Common myeloid progenitor, CD34-positive (primary cell): ENCODE measurements at regions of chr7 and their contacts with region 1.

Region 1: GRCh38 chr7:152336754-152337368 is 98.9 kb downstream of the KMT2C start:
- DNase-seq: peak; percentile 53 to 58 (median 56)
- H3K4me3 ChIP-seq: peak overlapping the region in 2 of 7 experiments; percentile 64 to 77
- H3K27ac ChIP-seq: peak overlapping the region; percentile 4 to 57
- H3K4me1 ChIP-seq: peaks cover 0 to 27% (median 8%) of the 10 kb centered on the region in 4 experiments
- H3K27me3 ChIP-seq: no peaks in the 10 kb centered on the region

Region 2: DNA sequence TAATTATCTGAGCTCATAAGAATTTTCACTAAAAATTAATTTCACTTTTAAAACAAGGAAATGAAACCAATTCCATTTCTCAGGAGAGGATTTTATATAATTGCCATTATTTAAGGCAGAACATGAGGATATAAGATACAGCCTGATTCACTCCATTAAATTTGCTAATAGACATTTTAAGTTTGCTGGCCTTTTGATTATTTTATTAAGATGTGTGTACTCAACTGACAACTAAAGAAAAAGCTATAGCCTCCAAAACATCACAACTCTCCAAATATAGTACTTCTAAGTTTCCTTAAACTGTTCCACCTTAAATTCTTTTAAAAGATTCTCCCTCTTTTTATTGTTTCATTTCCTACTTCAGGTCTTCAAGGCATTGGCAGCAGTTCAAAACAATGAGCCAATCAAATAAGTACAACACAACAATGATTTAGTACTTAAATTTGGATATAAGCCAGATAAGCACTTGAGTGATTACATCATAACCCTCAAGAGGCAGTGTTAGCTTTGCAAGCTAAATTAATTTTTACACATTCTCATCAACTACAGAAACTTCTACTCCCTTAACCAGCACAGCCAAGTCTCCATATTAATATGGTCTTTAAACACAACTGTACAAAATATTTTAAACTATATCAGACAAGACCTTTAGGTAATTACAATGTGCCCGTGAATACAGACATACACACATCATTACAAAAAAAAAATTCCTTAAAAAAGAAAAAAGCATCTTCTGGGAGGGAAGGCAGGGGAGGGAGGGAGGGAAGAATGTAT is 22.8 kb before region 1 on chr7:
- CTCF ChIA-PET with region 1: interaction called, 13 read pairs
- POLR2A ChIA-PET with region 1: no interaction called
- DNase-seq: peak; percentile 91 to 96 (median 96)
- H3K4me3 ChIP-seq: peak overlapping the region in 1 of 7 experiments; percentile 4
- H3K27ac ChIP-seq: peak overlapping the region; percentile 33 to 74
- H3K4me1 ChIP-seq: peaks cover 3 to 10% (median 4%) of the 10 kb centered on the region in 4 experiments
- H3K27me3 ChIP-seq: no peaks in the 10 kb centered on the region

Region 3: DNA sequence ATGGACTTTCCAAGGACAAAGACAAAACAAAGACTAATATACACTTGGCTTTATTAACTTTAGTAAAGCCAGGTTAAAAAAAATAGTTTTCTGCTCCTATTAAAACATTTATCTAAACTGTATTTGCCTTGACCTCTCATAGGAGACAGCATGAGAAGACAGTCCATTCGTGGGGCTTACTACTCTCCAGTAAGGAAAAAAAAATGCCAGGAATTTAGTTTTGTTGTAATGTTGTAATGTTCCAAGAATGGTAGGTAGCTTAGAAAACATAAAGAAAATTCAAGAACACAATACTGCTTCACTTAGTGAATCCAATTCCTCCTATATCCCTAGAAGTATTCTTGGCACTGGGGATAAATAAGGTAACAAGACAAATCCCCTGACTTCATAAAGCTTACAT is 17.2 kb after region 1 on chr7:
- CTCF ChIA-PET with region 1: interaction called, 14 read pairs
- POLR2A ChIA-PET with region 1: no interaction called
- DNase-seq: no peak
- H3K4me3 ChIP-seq: no peak overlapping the region
- H3K27ac ChIP-seq: no peak overlapping the region
- H3K4me1 ChIP-seq: no peaks in the 10 kb centered on the region
- H3K27me3 ChIP-seq: no peaks in the 10 kb centered on the region

Region 4: DNA sequence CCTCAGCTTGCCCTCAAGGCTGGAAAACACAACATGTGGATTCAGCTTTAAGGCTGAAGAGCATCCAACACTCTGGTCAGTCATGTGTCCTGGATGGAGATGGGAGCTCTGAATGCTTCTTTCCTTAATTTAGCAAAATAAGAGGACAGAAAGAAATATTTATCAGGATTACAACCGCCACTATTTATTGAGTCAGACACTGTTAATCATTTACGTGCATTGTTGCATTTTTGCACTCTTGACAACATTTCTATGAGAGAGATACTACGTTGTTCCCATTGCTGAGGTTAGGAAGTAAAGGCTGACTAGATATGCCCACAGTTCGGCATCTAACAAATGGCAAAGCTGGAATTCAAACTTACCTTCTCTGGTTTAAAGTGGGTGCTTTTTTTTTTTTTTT is 200.8 kb after region 1 on chr7:
- CTCF ChIA-PET with region 1: no interaction called
- POLR2A ChIA-PET with region 1: no interaction called
- DNase-seq: no peak
- H3K4me3 ChIP-seq: no peak overlapping the region
- H3K27ac ChIP-seq: no peak overlapping the region
- H3K4me1 ChIP-seq: no peaks in the 10 kb centered on the region
- H3K27me3 ChIP-seq: no peaks in the 10 kb centered on the region

Region 5: GRCh38 chr7:152551304-152552036 is 214.6 kb after region 1 on chr7:
- CTCF ChIA-PET with region 1: no interaction called
- POLR2A ChIA-PET with region 1: no interaction called
- DNase-seq: no peak
- H3K4me3 ChIP-seq: no peak overlapping the region
- H3K27ac ChIP-seq: no peak overlapping the region
- H3K4me1 ChIP-seq: no peaks in the 10 kb centered on the region
- H3K27me3 ChIP-seq: no peaks in the 10 kb centered on the region

Region 6: DNA sequence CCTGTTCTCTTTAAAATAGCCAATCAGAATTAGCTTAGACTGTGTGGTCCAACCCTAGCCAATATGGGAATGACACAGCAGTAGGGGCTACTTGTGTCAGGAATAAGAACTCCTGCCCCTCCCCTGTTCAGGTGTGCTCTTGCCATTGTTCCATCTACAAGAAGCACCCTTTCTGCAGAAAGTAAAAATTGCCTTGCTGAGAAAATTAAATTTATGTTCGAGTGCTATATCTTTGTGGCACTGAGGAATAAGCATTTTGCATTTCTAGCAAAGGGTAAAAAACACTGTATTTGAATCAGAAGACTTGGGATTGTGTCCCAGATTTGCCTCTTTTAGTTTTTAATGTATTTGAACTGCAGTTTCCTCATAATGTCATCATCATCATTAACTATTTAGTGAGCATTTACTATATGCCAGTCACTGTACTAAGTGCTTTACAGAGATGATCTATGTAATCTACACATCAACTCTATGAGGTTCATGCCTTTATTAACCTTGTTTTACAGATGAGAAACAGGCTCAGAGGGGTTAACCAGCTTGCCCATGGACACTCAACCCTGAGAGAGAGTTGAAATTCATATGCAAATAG is 368.0 kb after region 1 on chr7:
- CTCF ChIA-PET with region 1: interaction called, 37 read pairs
- POLR2A ChIA-PET with region 1: no interaction called
- DNase-seq: peak in 1 of 3 donors; percentile 8
- H3K4me3 ChIP-seq: no peak overlapping the region
- H3K27ac ChIP-seq: no peak overlapping the region
- H3K4me1 ChIP-seq: peaks cover 0 to 2% (median 0%) of the 10 kb centered on the region in 4 experiments
- H3K27me3 ChIP-seq: no peaks in the 10 kb centered on the region